Activated CD4-positive, alpha-beta T cell treated with anti-CD3 and anti-CD28 coated beads, Interleukin-2, amount 10 ng/mL, durations not matched to agents 7 days and 5 days (primary cell): ENCODE measurements at regions of chr16 and their contacts with region 1.

Region 1: GRCh38 chr16:57300387-57301125 is 16.1 kb upstream of the PLLP start:
- DNase-seq: peak; percentile 99
- H3K4me3 Mint-ChIP-seq: no peak overlapping the region
- H3K27ac Mint-ChIP-seq: no peak overlapping the region
- H3K4me1 Mint-ChIP-seq: peaks cover 23% of the 10 kb centered on the region
- H3K27me3 Mint-ChIP-seq: no peaks in the 10 kb centered on the region

Region 2: GRCh38 chr16:57279780-57280638 is 20.5 kb before region 1 on chr16:
- CTCF ChIA-PET with region 1: interaction called, 10 read pairs
- POLR2A ChIA-PET with region 1: no interaction called
- DNase-seq: no peak
- H3K4me3 Mint-ChIP-seq: no peak overlapping the region
- H3K27ac Mint-ChIP-seq: no peak overlapping the region
- H3K4me1 Mint-ChIP-seq: peaks cover 49% of the 10 kb centered on the region
- H3K27me3 Mint-ChIP-seq: peaks cover 29% of the 10 kb centered on the region

Region 3: DNA sequence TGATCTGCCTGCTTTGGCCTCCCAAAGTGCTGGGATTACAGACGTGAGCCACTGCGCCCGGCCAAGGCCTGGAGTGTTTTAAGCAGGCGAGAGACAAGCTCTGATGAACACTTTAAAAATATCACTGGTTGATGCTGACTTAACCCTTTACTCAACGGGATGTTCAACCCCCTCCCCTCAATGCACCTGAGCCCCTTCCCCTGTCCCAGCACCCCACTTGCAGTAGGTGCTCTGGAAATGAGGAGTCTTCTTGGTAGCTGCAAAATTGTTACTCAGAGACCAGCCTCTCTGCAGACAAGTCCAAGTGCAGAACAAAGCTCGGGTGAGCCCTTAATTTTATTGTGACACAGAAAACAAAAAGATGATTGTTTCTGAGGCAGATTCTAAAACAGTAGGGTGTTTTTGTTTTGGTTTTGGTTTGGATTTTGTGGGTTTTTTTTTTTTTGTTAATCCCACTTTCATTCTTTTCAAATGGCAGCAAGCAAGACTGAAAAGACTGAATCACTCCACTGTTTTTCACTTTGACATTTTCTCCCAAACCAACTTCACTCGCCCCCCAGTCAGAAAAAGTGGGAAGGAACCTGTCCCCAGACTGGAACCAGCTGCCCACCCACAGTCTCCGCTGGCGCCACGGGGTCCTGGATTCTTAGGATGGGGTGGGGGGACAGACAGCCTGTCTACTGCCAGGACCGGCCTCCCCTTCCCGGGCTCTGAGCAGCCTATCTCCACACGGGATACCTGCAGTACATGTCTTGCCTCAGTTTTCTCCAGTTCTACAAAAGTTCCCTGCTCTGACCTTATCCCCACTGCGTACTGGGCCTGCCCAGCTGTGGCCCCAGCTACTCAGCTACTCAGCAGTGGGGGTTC is 10.9 kb before region 1 on chr16:
- CTCF ChIA-PET with region 1: interaction called, 28 read pairs
- POLR2A ChIA-PET with region 1: no interaction called
- DNase-seq: no peak
- H3K4me3 Mint-ChIP-seq: no peak overlapping the region
- H3K27ac Mint-ChIP-seq: peak overlapping the region; percentile 77
- H3K4me1 Mint-ChIP-seq: peaks cover 19% of the 10 kb centered on the region
- H3K27me3 Mint-ChIP-seq: peaks cover 6% of the 10 kb centered on the region

Region 4: GRCh38 chr16:57413301-57413730 is 112.8 kb after region 1 on chr16:
- CTCF ChIA-PET with region 1: interaction called, 96 read pairs
- POLR2A ChIA-PET with region 1: no interaction called
- DNase-seq: no peak
- H3K4me3 Mint-ChIP-seq: no peak overlapping the region
- H3K27ac Mint-ChIP-seq: no peak overlapping the region
- H3K4me1 Mint-ChIP-seq: peaks cover 10% of the 10 kb centered on the region
- H3K27me3 Mint-ChIP-seq: no peaks in the 10 kb centered on the region

Region 5: DNA sequence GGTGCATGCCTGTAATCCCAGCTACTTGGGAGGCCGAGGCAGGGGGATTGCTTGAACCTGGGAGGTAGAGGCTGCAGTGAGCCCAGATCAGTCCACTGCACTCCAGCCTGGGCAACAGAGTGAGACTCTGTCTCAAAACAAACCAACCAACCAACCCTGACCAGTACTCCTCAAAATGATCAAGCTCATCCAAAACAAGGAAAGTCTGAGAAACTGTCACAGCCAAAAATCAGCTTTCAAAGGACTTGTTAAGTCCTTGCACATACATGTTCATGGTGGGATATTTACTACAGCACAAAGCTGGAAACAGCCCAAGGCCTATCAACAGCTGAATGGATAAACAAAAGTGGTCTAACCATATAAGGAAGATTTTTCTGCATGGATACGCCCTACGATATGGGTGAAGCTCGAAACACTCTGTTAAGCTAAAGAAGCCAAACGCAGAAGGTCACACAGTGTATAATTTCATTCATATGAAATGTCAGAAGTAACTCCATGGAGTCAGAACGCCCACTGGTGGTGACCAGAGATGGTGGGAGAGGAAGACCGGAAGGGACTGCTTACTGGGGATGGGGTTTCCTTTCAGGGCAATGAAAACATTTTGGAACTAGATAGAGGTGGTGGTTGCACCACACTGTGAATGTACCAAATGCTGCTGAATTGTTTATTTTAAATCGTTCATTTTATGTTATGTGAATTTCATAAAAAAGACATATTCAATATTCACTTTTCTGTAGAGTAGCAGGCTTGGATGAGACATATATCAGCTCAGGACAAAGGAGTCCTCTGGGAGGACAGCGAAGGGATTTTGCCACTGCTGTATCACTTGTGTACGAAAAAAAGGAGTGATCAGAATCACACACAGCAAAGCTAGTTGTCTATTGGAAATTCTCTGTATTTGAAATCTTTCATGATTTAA is 121.7 kb after region 1 on chr16:
- CTCF ChIA-PET with region 1: interaction called, 96 read pairs
- POLR2A ChIA-PET with region 1: no interaction called
- DNase-seq: no peak
- H3K4me3 Mint-ChIP-seq: no peak overlapping the region
- H3K27ac Mint-ChIP-seq: no peak overlapping the region
- H3K4me1 Mint-ChIP-seq: peaks cover 16% of the 10 kb centered on the region
- H3K27me3 Mint-ChIP-seq: no peaks in the 10 kb centered on the region

Region 6: GRCh38 chr16:57462209-57462977 is 161.8 kb after region 1 on chr16 and contains the start of gene POLR2C:
- CTCF ChIA-PET with region 1: interaction called, 10 read pairs
- POLR2A ChIA-PET with region 1: no interaction called
- DNase-seq: peak; percentile 93
- H3K4me3 Mint-ChIP-seq: peak within 1 kb of the TSS; percentile 99
- H3K27ac Mint-ChIP-seq: peak within 1 kb of the TSS; percentile 98
- H3K4me1 Mint-ChIP-seq: peaks cover 32% of the 10 kb centered on the region
- H3K27me3 Mint-ChIP-seq: no peaks in the 10 kb centered on the region
- total RNA-seq, gene POLR2C: 54.0 to 55.0 TPM